Caco-2 (cell line): ENCODE measurements at regions of chr3 and their contacts with region 1.

Region 1: DNA sequence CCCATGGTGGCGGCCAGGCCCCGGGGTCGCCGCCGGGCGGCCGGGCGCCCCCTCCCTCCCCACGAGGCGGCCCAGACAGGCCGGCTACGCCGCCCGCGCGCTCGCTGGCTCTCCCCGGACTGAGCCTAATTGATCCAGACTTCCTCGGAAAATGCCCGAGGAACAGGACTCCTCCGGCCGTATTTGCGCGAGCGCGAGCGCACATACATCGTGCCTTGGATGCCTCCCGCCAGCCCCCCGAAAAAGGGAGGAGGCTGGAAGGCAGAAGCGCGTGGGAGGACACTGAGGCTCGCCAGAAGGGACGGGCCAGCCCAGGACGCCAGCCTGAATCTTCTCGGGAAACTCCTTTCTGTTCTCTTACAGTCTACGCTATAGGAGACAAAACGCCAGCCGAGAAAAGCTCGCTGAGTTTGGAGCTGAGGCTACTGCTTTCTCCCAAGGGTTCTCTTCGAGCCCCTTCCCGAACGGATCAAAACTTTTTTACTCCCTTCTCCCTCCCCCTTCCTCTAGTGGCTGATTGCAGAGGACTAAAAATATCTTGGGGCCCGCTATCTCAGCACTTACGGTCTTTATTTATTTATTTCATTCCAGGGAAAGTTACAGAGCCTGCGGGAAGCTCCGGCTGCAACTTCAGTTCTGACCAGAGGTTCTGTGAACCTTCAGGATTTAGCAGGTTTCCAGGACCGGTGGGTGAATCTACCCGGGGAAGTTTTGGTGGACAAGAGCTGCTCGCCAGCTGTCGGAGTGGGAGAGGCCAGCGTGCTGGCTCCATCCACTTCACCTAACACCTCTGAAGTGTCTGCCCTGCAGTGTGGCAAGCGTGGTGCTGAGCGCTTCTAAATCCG is at the start of gene PDZRN3:
- DNase-seq: peak; percentile 67 to 69
- H3K4me3 ChIP-seq: peak within 1 kb of the TSS; percentile 68
- H3K4me3 Mint-ChIP-seq: peak within 1 kb of the TSS; percentile 86
- H3K27ac Mint-ChIP-seq: peak within 1 kb of the TSS; percentile 79
- H3K4me1 ChIP-seq: peaks cover 26% of the 10 kb centered on the region
- H3K4me1 Mint-ChIP-seq: peaks cover 16% of the 10 kb centered on the region
- H3K27me3 ChIP-seq: no peaks in the 10 kb centered on the region
- H3K27me3 Mint-ChIP-seq: no peaks in the 10 kb centered on the region
- CTCF ChIP-seq: no peak
- total RNA-seq, gene PDZRN3: 12.5 and 13.6 TPM in 2 replicates

Region 2: GRCh38 chr3:73745526-73746191 is 120.6 kb after region 1 on chr3:
- CTCF ChIA-PET with region 1: no interaction called
- POLR2A ChIA-PET with region 1: no interaction called
- intact Hi-C with region 1: no loop called
- DNase-seq: no peak
- H3K4me3 ChIP-seq: no peak overlapping the region
- H3K4me3 Mint-ChIP-seq: no peak overlapping the region
- H3K27ac Mint-ChIP-seq: no peak overlapping the region
- H3K4me1 ChIP-seq: no peaks in the 10 kb centered on the region
- H3K4me1 Mint-ChIP-seq: no peaks in the 10 kb centered on the region
- H3K27me3 ChIP-seq: no peaks in the 10 kb centered on the region
- H3K27me3 Mint-ChIP-seq: peaks cover 3% of the 10 kb centered on the region
- CTCF ChIP-seq: no peak

Region 3: GRCh38 chr3:73766599-73767381 is 141.7 kb after region 1 on chr3:
- CTCF ChIA-PET with region 1: no interaction called
- POLR2A ChIA-PET with region 1: no interaction called
- intact Hi-C with region 1: loop called (anchors 10 kb)
- DNase-seq: no peak
- H3K4me3 ChIP-seq: no peak overlapping the region
- H3K4me3 Mint-ChIP-seq: no peak overlapping the region
- H3K27ac Mint-ChIP-seq: no peak overlapping the region
- H3K4me1 ChIP-seq: no peaks in the 10 kb centered on the region
- H3K4me1 Mint-ChIP-seq: peaks cover 6% of the 10 kb centered on the region
- H3K27me3 ChIP-seq: no peaks in the 10 kb centered on the region
- H3K27me3 Mint-ChIP-seq: peaks cover 4% of the 10 kb centered on the region
- CTCF ChIP-seq: no peak

Region 4: GRCh38 chr3:73848173-73848906 is 223.3 kb after region 1 on chr3:
- CTCF ChIA-PET with region 1: no interaction called
- POLR2A ChIA-PET with region 1: no interaction called
- intact Hi-C with region 1: loop called (anchors 5 kb)
- DNase-seq: peak in 1 of 2 experiments; percentile 8
- H3K4me3 ChIP-seq: no peak overlapping the region
- H3K4me3 Mint-ChIP-seq: no peak overlapping the region
- H3K27ac Mint-ChIP-seq: no peak overlapping the region
- H3K4me1 ChIP-seq: peaks cover 7% of the 10 kb centered on the region; the same call in 1 of the 2 replicates
- H3K4me1 Mint-ChIP-seq: peaks cover 8% of the 10 kb centered on the region
- H3K27me3 ChIP-seq: no peaks in the 10 kb centered on the region; the same call in 1 of the 2 replicates
- H3K27me3 Mint-ChIP-seq: peaks cover 8% of the 10 kb centered on the region
- CTCF ChIP-seq: peak; percentile 63 to 69